ENCODE measurements at regions of chr4 and their contacts with region 1.

Region 1: DNA sequence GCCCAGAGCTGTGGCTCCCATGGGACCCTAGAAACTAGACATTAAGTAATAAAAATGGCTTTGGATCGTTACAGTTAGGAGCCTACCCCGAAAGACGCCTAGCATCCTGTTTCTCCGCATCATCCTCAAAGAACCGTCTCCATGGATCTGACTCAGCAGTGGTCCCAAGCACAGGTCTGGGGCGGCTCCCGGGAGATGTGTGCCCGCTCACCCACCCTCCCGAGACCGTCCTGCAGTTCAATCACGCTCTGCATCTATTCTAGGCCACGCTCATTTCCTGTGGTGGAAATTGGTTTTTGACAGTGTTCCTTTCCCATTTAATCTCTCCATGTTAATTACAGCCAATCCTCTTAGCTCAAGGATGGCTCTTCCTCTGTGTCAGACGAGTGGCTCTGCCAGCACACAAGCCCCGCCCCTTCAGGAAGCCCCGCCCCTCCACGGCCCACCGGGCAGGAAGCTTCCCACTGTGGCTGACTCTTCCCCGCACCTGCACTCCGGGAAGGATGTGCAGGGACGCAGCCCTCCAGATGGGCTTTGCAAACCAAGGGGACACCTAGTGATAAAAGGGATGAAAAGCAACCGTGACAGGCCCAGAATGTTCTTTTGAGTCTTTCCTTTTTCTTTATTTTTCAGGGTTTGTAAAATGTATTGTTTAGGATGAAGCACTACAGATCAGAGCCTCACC is 34.5 kb upstream of the HELT start:
- DNase-seq: no peak
- ATAC-seq: peak; percentile 61

Region 2: DNA sequence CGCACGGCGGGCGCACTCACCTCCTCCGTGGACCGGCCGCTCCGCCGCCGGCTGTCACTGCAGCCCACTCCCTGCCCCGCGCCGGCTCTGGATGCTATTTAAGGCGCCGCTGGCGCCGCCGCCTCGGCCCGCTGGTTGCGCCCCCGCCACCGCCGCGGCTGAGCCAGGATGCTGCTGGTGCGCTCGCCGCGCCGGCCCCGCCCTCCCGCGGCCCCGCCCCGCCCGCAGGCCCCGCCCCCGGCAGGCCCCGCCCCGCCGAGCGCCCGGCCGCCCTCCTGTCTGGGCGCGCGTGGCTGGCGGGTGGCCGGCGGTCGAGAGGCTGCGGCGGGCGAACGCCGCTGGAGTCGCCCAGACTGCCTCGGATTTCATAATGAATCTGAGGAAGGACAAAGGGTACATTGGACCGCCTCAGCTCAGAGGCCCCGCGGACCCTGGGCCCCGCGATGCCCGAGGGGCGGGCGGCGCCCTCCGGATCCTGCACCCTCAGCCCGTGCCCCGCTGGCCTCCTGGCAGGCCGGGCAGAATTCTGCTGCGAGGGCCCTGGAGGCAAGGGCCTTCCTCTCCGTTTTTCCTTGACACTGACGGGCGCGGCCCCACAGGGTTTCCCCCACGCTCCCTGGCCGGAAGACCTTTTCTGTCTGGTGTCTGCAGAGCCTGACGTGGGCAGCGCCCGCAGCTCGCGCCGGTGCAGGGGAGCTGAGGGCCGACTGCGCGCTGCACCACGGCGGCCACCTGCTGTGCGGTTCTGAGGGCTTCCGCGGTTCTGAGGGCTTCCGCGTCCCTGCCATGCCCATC is 157.7 kb before region 1 on chr4 and contains the start of gene ACSL1:
- intact Hi-C with region 1: loop called (anchors 10 kb)
- DNase-seq: peak; percentile 97
- ATAC-seq: peak; percentile 91
- total RNA-seq, gene ACSL1: 445 TPM

Region 3: DNA sequence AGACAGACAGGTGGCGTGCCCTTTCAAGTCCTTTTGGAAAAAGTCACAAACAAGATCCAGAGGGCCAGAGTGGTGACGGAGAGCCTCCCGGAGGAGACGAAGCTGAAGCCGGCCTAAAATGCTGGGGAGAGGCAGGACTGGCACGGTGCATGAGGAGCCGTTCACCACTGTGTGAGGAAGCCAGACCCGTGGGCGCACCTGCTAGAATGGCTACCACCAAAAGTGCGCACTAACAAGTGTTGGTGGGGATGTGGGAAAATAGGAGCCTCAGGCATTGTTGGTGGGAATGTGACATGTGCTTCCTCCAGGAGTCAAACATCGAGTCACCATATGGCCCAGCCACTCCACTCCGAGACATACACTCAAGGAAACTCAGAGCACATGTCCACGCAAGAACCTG is 32.9 kb before region 1 on chr4:
- intact Hi-C with region 1: no loop called
- DNase-seq: no peak
- ATAC-seq: no peak

Region 4: DNA sequence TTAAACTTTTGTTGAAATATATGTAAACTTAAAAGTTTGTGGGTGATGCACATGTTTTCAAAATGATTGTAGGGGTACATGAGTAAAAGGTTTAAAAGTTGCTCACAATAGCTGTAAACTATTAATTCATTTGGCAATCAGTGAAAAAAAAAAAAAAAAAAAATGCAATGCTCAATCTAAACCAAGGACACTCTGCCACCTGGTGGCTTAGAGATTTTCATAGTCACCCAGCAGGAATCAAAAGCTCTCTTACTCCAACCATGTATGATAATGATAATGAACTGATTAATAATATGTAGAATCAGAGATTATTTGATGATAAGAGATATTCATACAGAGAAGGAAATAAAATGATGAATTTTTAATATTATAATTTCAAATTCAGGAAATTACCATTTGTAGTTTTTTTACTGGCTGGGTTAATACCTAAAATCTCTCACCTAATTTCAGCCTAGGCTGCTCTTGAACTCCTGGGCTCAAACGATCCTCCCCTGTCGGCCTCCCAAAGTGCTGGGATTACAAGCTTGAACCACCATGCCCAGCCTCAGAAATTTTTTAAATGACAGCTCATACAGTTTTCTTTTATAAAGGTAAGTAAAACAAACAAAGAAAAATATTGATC is 112.3 kb after region 1 on chr4:
- intact Hi-C with region 1: no loop called
- DNase-seq: no peak
- ATAC-seq: no peak